ENCODE measurements at regions of chr4 and their contacts with region 1.

Region 1: GRCh38 chr4:159175085-159175988 is 72.5 kb downstream of the RAPGEF2 start:
- DNase-seq: peak; percentile 88
- H3K4me3 ChIP-seq: peak overlapping the region; percentile 20
- CTCF ChIP-seq: peak; percentile 67

Region 2: GRCh38 chr4:158722917-158723793 is 452.2 kb before region 1 on chr4 and contains the start of gene PPID:
- in situ Hi-C with region 1: loop called (anchors 25 kb)
- DNase-seq: no peak
- H3K4me3 ChIP-seq: peak within 1 kb of the TSS; percentile 67
- CTCF ChIP-seq: no peak

Region 3: GRCh38 chr4:158856852-158857251 is 318.5 kb before region 1 on chr4:
- in situ Hi-C with region 1: loop called (anchors 25 kb)
- DNase-seq: peak; percentile 35
- H3K4me3 ChIP-seq: no peak overlapping the region
- CTCF ChIP-seq: peak; percentile 45

Region 4: DNA sequence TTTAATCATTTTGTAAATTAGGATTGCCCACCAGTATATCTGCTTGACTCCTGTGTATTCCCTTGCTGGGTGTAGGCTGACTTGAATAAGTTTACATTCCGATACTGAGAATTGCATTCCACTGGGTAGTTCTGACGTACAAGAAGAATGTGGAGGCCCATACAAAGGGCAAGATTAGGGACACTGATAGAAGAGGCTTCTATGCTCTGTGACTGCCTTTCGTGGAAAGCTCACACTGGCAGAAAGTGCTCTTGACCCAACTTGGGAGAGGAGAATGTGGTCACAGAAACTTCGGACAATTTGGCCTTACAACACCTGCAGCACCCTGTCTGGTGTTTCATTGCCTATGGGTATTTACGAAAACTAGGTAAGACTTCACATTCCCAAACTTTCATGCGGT is 53.8 kb after region 1 on chr4:
- in situ Hi-C with region 1: no loop called
- DNase-seq: peak; percentile 32
- H3K4me3 ChIP-seq: no peak overlapping the region
- CTCF ChIP-seq: no peak